ENCODE measurements at regions of chr3 and their contacts with region 1.

Region 1: GRCh38 chr3:194315088-194315964 is 35.8 kb downstream of the CPN2 start:
- DNase-seq: peak; percentile 88
- ATAC-seq: peak; percentile 92 to 93
- H3K4me3 ChIP-seq: peak overlapping the region; percentile 56
- H3K27ac ChIP-seq: peak overlapping the region; percentile 33
- H3K4me1 ChIP-seq: peaks cover 33% of the 10 kb centered on the region
- H3K27me3 ChIP-seq: peaks cover 6% of the 10 kb centered on the region
- CTCF ChIP-seq: peak; percentile 98

Region 2: GRCh38 chr3:193788189-193788991 is 526.9 kb before region 1 on chr3:
- intact Hi-C with region 1: loop called (anchors 5 kb)
- DNase-seq: peak; percentile 63
- ATAC-seq: peak; percentile 87 to 88
- H3K4me3 ChIP-seq: no peak overlapping the region
- H3K27ac ChIP-seq: no peak overlapping the region
- H3K4me1 ChIP-seq: peaks cover 12% of the 10 kb centered on the region
- H3K27me3 ChIP-seq: no peaks in the 10 kb centered on the region
- CTCF ChIP-seq: peak; percentile 81

Region 3: DNA sequence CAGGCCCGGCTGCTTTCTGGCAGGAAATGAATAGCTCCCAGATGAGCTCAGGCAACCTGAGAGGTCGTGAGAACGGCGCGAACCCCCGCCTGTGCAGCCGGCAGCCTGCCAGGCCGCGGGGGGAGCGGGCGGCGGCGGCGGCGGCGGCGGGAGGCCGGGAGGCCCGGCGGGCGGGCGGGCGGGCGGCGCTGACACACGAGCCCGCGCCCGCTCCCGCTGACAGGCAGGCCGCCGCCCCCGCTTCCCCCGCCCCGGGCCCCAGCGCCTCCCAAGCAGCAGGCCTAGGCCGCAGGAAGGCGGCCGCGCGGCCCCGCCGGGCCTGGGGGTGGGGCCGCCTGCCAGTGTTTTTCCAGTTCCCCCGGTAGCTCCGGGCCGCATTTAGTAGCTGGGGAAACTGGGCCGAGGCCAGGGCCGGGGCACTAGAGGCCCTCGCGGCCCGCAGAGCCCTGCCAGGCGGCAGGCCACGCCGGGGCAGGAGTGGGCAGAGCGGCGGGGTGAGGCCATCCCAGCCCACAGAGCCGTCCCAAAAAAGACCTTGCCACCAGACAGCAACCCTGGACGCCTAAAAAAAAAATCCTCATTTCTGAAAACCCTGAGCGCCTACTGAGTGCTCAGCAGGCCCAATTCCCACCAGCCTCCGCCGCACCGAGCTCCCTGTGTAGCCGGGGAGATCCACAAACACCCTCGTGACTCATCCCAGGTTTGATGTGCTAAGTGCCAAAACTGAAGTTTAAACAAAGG is 173.7 kb before region 1 on chr3:
- intact Hi-C with region 1: loop called (anchors 10 kb)
- DNase-seq: peak; percentile 95
- ATAC-seq: peak; percentile 85 to 93
- H3K4me3 ChIP-seq: peak overlapping the region; percentile 45
- H3K27ac ChIP-seq: peak overlapping the region; percentile 95
- H3K4me1 ChIP-seq: peaks cover 45% of the 10 kb centered on the region
- H3K27me3 ChIP-seq: peaks cover 4% of the 10 kb centered on the region
- CTCF ChIP-seq: no peak

Region 4: GRCh38 chr3:194351952-194352536 is 36.7 kb after region 1 on chr3:
- intact Hi-C with region 1: no loop called
- DNase-seq: no peak
- ATAC-seq: peak in 1 of 2 donors; percentile 18
- H3K4me3 ChIP-seq: no peak overlapping the region
- H3K27ac ChIP-seq: no peak overlapping the region
- H3K4me1 ChIP-seq: no peaks in the 10 kb centered on the region
- H3K27me3 ChIP-seq: no peaks in the 10 kb centered on the region
- CTCF ChIP-seq: no peak